ENCODE measurements at regions of chr20 and their contacts with region 1.

Region 1: GRCh38 chr20:10611357-10611756 is 62.4 kb downstream of the JAG1 start:
- DNase-seq: peak; percentile 73
- ATAC-seq: peak; percentile 47

Region 2: DNA sequence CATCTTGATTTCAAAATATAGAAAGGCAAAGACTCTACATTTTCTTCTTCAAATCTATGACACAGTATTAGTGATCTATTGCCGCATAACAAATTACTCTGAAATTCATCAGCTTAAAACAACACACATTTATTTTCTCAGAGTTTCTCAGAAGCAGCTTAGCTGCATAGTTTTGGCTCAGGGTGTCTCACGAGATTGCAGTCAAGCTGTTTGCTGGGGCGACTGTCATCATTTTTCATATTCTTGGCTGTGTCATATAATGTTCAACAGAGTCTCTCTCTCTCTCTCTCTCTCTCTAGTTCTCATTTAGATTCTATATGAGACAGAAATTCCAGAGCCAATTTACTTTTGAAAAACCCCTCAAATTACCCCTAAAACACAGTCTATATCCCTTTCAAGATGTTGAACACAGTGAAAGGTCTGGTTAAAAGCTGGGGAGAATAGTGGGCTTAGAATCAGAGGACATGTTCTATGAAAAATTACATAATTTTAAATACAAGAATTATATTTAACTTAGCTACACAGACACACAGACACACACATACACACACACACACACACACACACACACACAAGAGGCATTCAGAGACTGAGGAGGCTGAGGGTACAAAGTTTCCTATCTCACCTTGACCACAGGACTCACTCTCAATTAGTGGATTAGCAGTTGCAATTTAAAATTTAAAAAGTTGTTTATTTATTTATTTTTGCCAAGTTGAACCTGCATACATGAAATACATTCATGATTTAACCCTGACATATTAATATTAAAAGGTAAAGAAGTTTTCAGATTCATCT is 264.1 kb before region 1 on chr20:
- intact Hi-C with region 1: no loop called
- DNase-seq: no peak
- ATAC-seq: no peak

Region 3: DNA sequence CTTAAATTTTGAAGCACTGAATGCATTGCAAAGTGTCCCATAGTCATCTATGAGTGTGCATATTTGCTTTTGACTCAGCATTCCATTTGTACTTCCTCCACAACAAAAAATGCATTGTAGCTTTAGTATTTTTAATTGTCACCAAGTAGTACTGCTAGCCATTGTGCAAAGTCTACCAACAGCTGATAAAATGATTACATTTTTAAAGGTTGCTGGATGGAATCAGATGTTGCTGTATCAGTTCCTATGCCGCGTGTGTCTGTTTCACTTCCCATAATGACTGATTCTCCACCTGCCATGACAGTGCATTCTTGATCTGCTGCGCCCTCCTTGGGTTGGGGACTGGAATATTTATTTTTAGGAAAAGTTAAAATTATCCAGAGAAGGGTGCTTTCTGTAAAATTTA is 135.0 kb before region 1 on chr20:
- intact Hi-C with region 1: loop called (anchors 10 kb)
- DNase-seq: no peak
- ATAC-seq: peak; percentile 52

Region 4: GRCh38 chr20:10654630-10655029 is 43.3 kb after region 1 on chr20:
- intact Hi-C with region 1: loop called (anchors 5 kb)
- DNase-seq: no peak
- ATAC-seq: no peak